ENCODE measurements at regions of chr11 and their contacts with region 1.

Region 1: DNA sequence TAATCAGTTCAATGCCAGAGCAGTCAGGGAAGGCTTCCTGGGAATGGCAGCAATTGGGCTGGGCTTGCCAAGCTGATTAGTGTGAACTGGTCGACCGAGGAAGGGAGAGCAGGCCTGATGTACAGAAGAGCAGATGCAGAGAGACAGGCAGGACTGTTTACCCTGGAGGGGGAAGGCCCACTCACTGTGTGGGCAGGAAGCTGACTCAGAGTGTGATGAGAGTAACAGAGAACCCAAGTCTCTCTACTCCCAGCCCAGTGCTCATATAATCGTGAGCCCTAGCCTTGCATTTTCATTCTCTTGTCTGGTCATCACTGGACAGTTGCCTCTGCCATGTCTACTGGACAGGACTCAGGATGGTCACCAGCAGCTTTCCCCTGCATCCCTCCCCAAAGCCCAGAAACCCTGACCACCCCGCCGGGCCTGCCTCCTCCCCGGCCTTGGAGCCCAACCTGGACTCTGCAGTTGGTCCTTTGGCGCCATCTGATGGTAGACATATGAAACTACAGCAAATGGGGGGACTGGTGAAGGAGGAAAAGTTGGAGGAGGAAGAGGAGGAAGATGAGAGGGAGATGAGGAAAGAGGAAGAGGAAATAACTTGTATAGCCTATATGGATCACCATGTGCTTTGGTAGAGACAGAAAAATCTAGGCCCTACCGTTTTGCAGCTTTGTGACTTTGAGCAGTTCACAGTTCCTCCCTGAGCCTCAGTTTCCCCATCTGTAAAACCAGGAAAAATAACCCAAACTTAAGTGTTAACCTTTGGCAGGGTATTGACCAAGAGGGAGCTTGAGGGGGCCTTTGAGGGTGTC is 43.4 kb upstream of the PRDM11 start:
- DNase-seq: peak; percentile 74
- H3K27ac ChIP-seq: peak overlapping the region; percentile 74
- CTCF ChIP-seq: peak; percentile 96

Region 2: DNA sequence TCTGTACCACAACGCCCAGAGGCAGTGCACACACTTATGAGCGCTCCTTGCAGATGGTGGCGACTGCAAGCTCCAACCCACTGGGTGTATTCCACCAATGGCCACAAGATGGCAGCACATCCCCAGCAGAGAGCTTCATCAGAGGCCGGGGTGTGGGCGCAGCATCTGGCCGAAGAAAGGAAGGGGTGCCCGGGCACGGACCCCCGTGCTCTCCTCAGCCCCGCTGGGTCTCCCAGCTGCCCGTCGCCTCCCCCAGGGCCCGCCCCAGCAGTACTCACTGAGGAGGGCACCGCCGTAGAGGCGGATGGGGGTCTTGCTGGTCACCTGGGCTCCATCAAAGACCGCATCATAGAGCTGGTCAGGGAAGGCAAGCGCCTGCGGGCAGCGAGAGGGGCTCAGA is 166.5 kb before region 1 on chr11:
- CTCF ChIA-PET with region 1: interaction called, 407 read pairs
- POLR2A ChIA-PET with region 1: no interaction called
- DNase-seq: peak; percentile 68
- H3K27ac ChIP-seq: peak overlapping the region; percentile 70
- CTCF ChIP-seq: peak; percentile 90

Region 3: DNA sequence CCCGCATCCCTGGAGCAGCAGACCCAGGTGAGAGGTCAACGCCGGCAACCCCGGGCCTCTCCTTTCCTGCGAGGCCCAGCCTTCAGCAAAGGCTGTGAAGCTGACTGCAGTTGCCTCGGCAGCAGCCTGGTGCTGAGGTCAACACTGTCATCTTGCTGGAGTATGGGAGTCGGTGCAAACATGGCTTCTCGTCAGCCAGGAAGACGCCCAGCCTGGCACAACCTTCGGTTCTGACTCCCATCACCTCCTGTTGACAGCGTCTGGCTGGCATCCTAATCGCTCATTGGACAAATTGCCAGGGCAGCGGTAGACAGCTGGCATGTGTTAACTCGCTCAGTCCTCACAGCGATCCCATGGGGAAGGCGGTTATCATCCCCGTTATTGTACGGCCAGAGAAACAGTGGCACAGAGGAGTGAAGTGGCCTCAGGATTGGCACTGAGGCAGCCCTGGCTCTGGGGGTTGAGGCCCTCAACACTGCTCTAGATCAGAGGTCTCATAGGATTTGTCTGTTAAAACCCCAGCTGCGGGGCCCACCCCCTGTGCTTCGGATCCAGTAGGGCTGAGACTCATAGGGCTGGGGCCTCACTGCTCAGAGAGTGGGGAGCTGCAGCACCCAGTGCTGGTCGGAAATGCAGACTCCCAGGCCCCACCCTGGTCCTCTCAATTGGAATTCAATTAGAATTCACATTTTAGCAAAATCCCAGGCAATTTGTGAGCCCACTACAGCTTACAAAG is 113.0 kb before region 1 on chr11:
- CTCF ChIA-PET with region 1: no interaction called
- POLR2A ChIA-PET with region 1: no interaction called
- DNase-seq: peak; percentile 57
- H3K27ac ChIP-seq: peak overlapping the region; percentile 77
- CTCF ChIP-seq: no peak

Region 4: GRCh38 chr11:45133871-45134270 is 30.9 kb after region 1 on chr11:
- CTCF ChIA-PET with region 1: no interaction called
- POLR2A ChIA-PET with region 1: no interaction called
- DNase-seq: no peak
- H3K27ac ChIP-seq: no peak overlapping the region
- CTCF ChIP-seq: no peak

Measured in RWPE1 (cell line).